Astrocyte of the cerebellum (primary cell): ENCODE measurements at regions of chr16 and their contacts with region 1.

Region 1: GRCh38 chr16:86294535-86295196 is 215.7 kb upstream of the FOXF1 start:
- DNase-seq: no peak
- H3K4me3 ChIP-seq: no peak overlapping the region
- CTCF ChIP-seq: no peak

Region 2: GRCh38 chr16:86195863-86196630 is 98.6 kb before region 1 on chr16:
- in situ Hi-C with region 1: loop called (anchors 5 kb)
- DNase-seq: no peak
- H3K4me3 ChIP-seq: no peak overlapping the region
- CTCF ChIP-seq: no peak